ENCODE measurements at regions of chr1 and their contacts with region 1.

Region 1: GRCh38 chr1:228664399-228664914 is 70.8 kb upstream of the RHOU start:
- DNase-seq: peak; percentile 72
- H3K4me3 ChIP-seq: no peak overlapping the region
- H3K27ac ChIP-seq: no peak overlapping the region
- H3K4me1 ChIP-seq: no peaks in the 10 kb centered on the region
- H3K27me3 ChIP-seq: no peaks in the 10 kb centered on the region
- CTCF ChIP-seq: peak; percentile 94
- EP300 ChIP-seq: no peak
- RAD21 ChIP-seq: peak; percentile 95

Region 2: GRCh38 chr1:228226956-228227791 is 437.3 kb before region 1 on chr1:
- CTCF ChIA-PET with region 1: no interaction called
- POLR2A ChIA-PET with region 1: no interaction called
- DNase-seq: no peak
- H3K4me3 ChIP-seq: no peak overlapping the region
- H3K27ac ChIP-seq: no peak overlapping the region
- H3K4me1 ChIP-seq: no peaks in the 10 kb centered on the region
- H3K27me3 ChIP-seq: no peaks in the 10 kb centered on the region
- CTCF ChIP-seq: peak; percentile 17; the same call in 1 of the 2 replicates
- EP300 ChIP-seq: no peak
- RAD21 ChIP-seq: no peak

Region 3: DNA sequence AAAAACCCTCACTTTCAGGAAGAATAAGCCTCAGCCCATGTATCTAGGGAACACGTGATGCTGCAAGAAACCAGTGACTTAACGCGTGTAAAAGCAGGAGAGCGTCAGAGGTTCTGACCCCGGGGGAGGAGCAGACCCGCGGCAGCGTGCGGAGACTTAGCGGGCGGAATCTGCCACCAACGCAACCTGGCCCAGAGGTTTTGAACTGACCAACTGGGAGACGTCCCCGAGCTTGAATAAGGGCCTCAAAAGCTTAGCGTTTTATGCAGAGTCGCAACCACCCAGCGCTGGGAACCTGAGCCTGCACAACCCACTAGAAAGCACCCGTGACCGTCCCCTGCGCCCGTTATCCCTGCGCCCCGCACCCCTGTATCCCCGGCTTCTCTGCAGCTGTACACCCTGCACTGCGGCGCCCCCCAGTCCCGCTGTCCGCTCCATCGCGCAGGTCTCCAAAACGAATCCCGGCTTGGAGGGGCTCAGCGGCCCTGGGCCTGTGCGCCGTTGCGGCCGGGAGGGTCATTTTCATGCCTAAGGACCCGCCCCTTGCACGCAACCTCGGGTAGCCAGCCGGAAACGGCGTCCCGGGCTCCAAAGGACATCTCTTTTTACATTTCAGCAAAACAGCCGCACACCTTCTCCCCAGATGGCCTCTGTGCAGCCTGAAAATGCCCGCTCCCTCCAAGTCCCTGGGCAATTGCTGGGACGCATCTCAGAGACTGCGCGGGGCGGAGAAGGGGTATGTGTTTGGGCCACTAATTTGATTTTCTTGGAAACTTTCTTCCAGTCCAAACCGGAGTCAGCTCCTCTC is 218.4 kb before region 1 on chr1:
- CTCF ChIA-PET with region 1: no interaction called
- POLR2A ChIA-PET with region 1: no interaction called
- DNase-seq: no peak
- H3K4me3 ChIP-seq: no peak overlapping the region
- H3K27ac ChIP-seq: no peak overlapping the region
- H3K4me1 ChIP-seq: no peaks in the 10 kb centered on the region; a peak in 1 of 4 replicates
- H3K27me3 ChIP-seq: no peaks in the 10 kb centered on the region
- CTCF ChIP-seq: no peak
- EP300 ChIP-seq: no peak
- RAD21 ChIP-seq: no peak

Region 4: DNA sequence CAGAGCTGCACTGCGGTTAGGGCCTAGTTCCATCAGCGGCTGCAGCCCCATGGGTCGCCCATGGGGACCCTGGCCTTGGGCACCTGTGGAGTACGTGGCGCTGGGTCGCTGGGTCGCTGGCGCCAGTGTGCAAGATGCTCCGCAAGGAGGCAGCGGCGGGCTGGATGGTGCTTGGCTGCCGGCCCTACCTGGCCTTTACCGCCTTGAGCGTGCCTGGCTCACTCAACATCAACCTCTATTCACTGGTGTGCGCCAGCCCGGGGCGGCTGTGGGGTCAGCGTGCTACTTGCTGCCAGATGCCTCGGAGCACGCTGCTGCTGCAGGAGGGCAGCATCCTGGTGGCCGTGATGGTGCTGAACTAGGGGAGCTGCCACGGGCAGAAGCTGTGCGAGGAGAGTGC is 14.3 kb before region 1 on chr1:
- CTCF ChIA-PET with region 1: interaction called, 16 read pairs
- POLR2A ChIA-PET with region 1: no interaction called
- DNase-seq: no peak
- H3K4me3 ChIP-seq: no peak overlapping the region
- H3K27ac ChIP-seq: no peak overlapping the region
- H3K4me1 ChIP-seq: peaks cover 0 to 18% of the 10 kb centered on the region in 2 experiments; a peak in 2 of 4 replicates
- H3K27me3 ChIP-seq: no peaks in the 10 kb centered on the region
- CTCF ChIP-seq: no peak
- EP300 ChIP-seq: no peak
- RAD21 ChIP-seq: no peak

Region 5: DNA sequence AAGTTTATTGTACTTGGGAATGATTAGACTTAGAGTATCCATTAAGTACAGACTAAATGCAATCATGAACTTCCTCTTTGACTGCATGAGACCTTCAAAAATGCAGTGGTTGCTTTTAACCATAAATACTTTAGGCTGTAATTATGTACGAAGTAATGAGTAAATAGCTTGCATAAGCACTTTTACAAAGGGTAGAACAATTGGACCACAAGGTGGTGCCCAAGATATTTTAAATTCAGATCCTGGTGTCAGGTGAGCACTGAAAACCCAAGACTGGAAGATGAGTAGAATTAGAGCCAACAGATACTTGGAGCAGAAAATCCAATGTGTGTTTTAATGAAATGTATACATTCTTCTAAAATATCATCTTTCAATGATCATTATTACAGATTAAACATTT is 27.5 kb after region 1 on chr1:
- CTCF ChIA-PET with region 1: interaction called, 16 read pairs
- POLR2A ChIA-PET with region 1: no interaction called
- DNase-seq: peak; percentile 45
- H3K4me3 ChIP-seq: no peak overlapping the region
- H3K27ac ChIP-seq: no peak overlapping the region
- H3K4me1 ChIP-seq: no peaks in the 10 kb centered on the region
- H3K27me3 ChIP-seq: no peaks in the 10 kb centered on the region
- CTCF ChIP-seq: peak; percentile 53
- EP300 ChIP-seq: no peak
- RAD21 ChIP-seq: peak; percentile 79

Region 6: GRCh38 chr1:228702433-228702832 is 38.0 kb after region 1 on chr1:
- CTCF ChIA-PET with region 1: interaction called, 10 read pairs
- POLR2A ChIA-PET with region 1: no interaction called
- DNase-seq: no peak
- H3K4me3 ChIP-seq: no peak overlapping the region
- H3K27ac ChIP-seq: no peak overlapping the region
- H3K4me1 ChIP-seq: peaks cover 0 to 2% of the 10 kb centered on the region in 2 experiments; a peak in 1 of 4 replicates
- H3K27me3 ChIP-seq: no peaks in the 10 kb centered on the region
- CTCF ChIP-seq: no peak
- EP300 ChIP-seq: no peak
- RAD21 ChIP-seq: no peak

Region 7: GRCh38 chr1:229514578-229515275 is 850.3 kb after region 1 on chr1:
- CTCF ChIA-PET with region 1: interaction called, 14 read pairs
- POLR2A ChIA-PET with region 1: no interaction called
- DNase-seq: peak; percentile 66
- H3K4me3 ChIP-seq: peak overlapping the region in 1 of 2 experiments; percentile 21; a peak in 1 of 4 replicates
- H3K27ac ChIP-seq: no peak overlapping the region
- H3K4me1 ChIP-seq: no peaks in the 10 kb centered on the region; a peak in 1 of 4 replicates
- H3K27me3 ChIP-seq: no peaks in the 10 kb centered on the region
- CTCF ChIP-seq: peak; percentile 87
- EP300 ChIP-seq: no peak
- RAD21 ChIP-seq: peak; percentile 76

Measured in SK-N-SH (cell line).